GM23248 (cell line): ENCODE measurements at regions of chr2 and their contacts with region 1.

Region 1: DNA sequence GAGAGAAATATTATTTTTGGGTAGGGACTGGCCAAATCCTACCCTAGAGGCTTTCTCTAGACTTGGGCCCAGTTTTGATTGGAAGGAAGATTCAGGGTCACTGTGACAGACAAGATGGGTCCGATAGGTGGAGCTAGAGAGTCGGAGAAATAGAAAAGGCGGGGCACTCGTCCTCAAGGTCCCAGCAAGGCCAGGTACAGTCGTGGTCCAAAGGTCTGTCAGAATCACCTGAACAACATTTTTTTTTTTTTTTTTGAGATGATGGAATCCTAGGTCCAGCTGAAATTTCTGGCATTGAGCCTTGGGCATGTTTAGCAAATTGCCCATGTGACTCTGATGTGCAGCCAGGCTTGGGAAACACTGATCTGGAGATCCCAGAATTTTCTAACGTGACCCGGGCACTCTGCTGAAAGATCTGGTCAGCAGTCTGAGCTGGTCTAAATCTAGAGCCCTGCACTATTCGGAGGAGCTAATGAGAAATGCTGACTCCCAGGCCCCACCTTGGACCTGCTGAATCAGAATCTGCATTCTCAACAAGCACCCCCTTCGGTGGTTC is 23.0 kb upstream of the NTSR2 start:
- DNase-seq: peak; percentile 77
- H3K4me3 ChIP-seq: no peak overlapping the region
- H3K27ac ChIP-seq: no peak overlapping the region
- H3K4me1 ChIP-seq: peaks cover 21% of the 10 kb centered on the region
- H3K27me3 ChIP-seq: no peaks in the 10 kb centered on the region

Region 2: GRCh38 chr2:11534744-11535484 is 158.1 kb before region 1 on chr2:
- in situ Hi-C with region 1: no loop called
- DNase-seq: no peak
- H3K4me3 ChIP-seq: no peak overlapping the region
- H3K27ac ChIP-seq: no peak overlapping the region
- H3K4me1 ChIP-seq: no peaks in the 10 kb centered on the region
- H3K27me3 ChIP-seq: peaks cover 30% of the 10 kb centered on the region

Region 3: GRCh38 chr2:11784747-11785610 is 91.9 kb after region 1 on chr2:
- in situ Hi-C with region 1: loop called (anchors 5 kb)
- DNase-seq: peak; percentile 82
- H3K4me3 ChIP-seq: peak overlapping the region; percentile 61
- H3K27ac ChIP-seq: no peak overlapping the region
- H3K4me1 ChIP-seq: no peaks in the 10 kb centered on the region
- H3K27me3 ChIP-seq: no peaks in the 10 kb centered on the region

Region 4: GRCh38 chr2:11863103-11863502 is 170.1 kb after region 1 on chr2:
- in situ Hi-C with region 1: no loop called
- DNase-seq: no peak
- H3K4me3 ChIP-seq: no peak overlapping the region
- H3K27ac ChIP-seq: no peak overlapping the region
- H3K4me1 ChIP-seq: no peaks in the 10 kb centered on the region
- H3K27me3 ChIP-seq: no peaks in the 10 kb centered on the region